ENCODE measurements at regions of chr3 and their contacts with region 1.

Region 1: DNA sequence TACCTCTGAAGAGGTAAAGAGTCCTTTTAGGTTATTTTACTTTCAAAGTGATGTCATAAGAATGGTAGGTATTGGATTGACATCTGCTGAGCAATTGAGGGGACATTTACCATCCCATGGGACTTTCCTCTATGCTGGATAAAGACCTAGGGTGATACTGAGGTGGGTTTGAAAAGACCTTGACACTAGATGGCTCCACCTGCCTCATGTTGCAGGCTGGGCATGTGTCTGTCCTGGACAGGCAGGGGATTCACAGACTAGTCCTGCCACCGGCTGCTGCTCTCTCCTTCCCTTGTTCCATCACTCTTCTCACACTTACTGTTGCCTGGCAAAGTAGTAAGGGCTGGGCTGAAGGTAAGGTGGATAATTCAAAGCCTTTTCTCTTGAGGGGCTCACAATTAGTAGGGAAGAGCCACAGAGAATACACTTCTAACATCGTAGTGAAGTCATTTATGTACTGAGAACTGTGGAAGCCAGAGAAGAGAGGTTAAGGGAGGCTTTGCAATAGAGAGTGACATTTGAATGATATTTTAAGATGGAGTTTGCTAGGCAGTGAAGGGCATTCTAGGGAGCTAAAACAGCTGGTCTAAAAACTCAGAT is 27.7 kb downstream of the TRAK1 start:
- DNase-seq: no peak
- ATAC-seq: peak; percentile 79

Region 2: GRCh38 chr3:41608347-41608746 is 510.5 kb before region 1 on chr3:
- intact Hi-C with region 1: no loop called
- DNase-seq: no peak
- ATAC-seq: no peak

Region 3: DNA sequence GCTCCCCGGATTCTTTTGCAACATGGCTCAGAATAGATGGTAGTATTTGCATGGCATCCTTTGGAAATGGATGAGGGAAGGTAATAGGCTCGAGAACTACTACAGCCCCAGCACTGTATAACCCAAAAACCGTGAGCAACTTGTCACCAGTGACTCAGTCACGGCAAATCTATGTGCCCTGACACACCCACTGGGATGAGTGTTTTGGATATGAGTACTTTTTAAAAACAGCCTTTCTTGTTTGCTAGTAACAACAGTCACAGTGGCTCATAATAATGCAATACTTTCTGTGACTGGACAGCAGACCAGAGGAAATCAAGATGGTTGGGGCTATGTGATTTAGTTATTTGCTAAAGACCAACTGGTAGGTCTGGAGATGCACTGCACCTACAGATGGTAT is 456.6 kb before region 1 on chr3:
- intact Hi-C with region 1: no loop called
- DNase-seq: no peak
- ATAC-seq: no peak

Region 4: GRCh38 chr3:42190701-42191462 is 72.0 kb after region 1 on chr3:
- intact Hi-C with region 1: loop called in 1 of 2 experiments (anchors 5 kb)
- DNase-seq: peak in 1 of 2 donors; percentile 85
- ATAC-seq: peak; percentile 82

Region 5: GRCh38 chr3:42228806-42229205 is 109.9 kb after region 1 on chr3:
- intact Hi-C with region 1: no loop called
- DNase-seq: no peak
- ATAC-seq: no peak